Left ventricle myocardium inferior (tissue), 1 donor: ENCODE measurements at regions of chr6 and their contacts with region 1.

Region 1: GRCh38 chr6:39302669-39303424 is 11.4 kb downstream of the KCNK17 start:
- DNase-seq: peak; percentile 79
- H3K4me3 ChIP-seq: peak overlapping the region; percentile 21
- H3K27ac ChIP-seq: no peak overlapping the region
- H3K4me1 ChIP-seq: peaks cover 3% of the 10 kb centered on the region
- H3K27me3 ChIP-seq: peaks cover 46% of the 10 kb centered on the region
- CTCF ChIP-seq: peak; percentile 90

Region 2: GRCh38 chr6:38973178-38974054 is 329.4 kb before region 1 on chr6:
- intact Hi-C with region 1: loop called (anchors 10 kb)
- DNase-seq: no peak
- H3K4me3 ChIP-seq: no peak overlapping the region
- H3K27ac ChIP-seq: peak overlapping the region; percentile 67
- H3K4me1 ChIP-seq: peaks cover 21% of the 10 kb centered on the region
- H3K27me3 ChIP-seq: peaks cover 17% of the 10 kb centered on the region
- CTCF ChIP-seq: peak; percentile 72

Region 3: GRCh38 chr6:39166189-39166911 is 136.5 kb before region 1 on chr6:
- intact Hi-C with region 1: loop called (anchors 5 kb)
- DNase-seq: peak; percentile 59
- H3K4me3 ChIP-seq: no peak overlapping the region
- H3K27ac ChIP-seq: no peak overlapping the region
- H3K4me1 ChIP-seq: peaks cover 3% of the 10 kb centered on the region
- H3K27me3 ChIP-seq: peaks cover 42% of the 10 kb centered on the region
- CTCF ChIP-seq: peak; percentile 87